H1 (cell line): ENCODE measurements at regions of chr3 and their contacts with region 1.

Region 1: DNA sequence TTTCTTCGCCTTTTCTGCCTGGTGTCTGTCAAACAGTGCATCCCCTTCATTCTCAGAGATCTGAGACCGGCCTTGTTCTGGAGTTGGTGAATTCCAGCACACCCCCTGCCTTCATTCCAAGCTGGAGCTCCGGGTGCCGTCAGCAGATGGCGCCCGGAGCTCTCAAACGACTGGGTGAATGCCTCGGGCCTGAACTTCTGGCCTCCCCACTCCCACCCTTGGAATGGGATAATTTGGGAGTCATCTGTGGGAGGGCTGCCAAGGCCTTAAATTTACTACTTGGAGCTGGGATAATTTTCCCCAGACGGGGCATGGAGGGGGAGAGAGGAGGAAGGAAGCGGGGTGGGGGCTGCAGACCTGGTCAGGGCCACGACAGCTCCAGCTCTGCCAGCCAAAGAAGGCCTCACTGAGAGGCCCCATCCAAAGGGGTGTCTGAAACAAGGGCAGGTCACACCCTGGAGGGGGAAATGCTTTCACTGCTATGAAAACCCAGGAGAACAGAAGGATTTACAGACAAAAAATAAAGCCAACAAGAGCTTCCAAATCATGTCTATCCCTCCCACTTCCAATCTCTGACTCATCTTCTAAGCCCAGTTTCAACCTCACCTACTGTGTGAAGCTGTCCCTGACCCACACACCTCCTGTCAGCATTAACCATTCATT is 187.9 kb downstream of the OPA1 start:
- DNase-seq: peak; percentile 50 to 71
- H3K4me3 ChIP-seq: no peak overlapping the region
- H3K27ac ChIP-seq: no peak overlapping the region
- H3K4me1 ChIP-seq: peaks cover 12 to 21% (median 18%) of the 10 kb centered on the region in 4 experiments
- H3K27me3 ChIP-seq: peaks cover 0 to 20% (median 4%) of the 10 kb centered on the region in 4 experiments; a peak in 5 of 7 replicates
- CTCF ChIP-seq: peak; percentile 63 to 88 (median 73)
- EP300 ChIP-seq: no peak
- POLR2A ChIP-seq: no peak
- RAD21 ChIP-seq: peak; percentile 92 to 98

Region 2: DNA sequence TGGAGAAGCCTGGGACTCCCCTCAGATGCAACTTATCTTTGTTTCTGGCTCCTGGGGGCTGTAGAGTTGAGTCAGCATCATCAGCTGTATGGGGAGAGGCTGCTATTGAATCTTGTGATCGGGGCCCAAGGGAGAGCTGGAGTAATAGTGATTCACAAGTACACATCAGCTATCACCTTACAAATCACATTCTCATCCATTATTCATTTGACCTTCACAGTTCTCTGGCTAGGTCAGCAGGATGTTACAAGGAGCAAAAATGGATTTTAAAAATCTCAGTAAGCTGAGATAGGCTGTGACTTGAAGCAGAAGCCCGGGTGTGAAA is 12.9 kb before region 1 on chr3:
- CTCF ChIA-PET with region 1: interaction called, 24 read pairs
- POLR2A ChIA-PET with region 1: no interaction called
- DNase-seq: no peak
- H3K4me3 ChIP-seq: no peak overlapping the region
- H3K27ac ChIP-seq: no peak overlapping the region
- H3K4me1 ChIP-seq: peaks cover 0 to 4% (median 0%) of the 10 kb centered on the region in 4 experiments; a peak in 3 of 7 replicates
- H3K27me3 ChIP-seq: peaks cover 0 to 3% (median 2%) of the 10 kb centered on the region in 4 experiments; a peak in 3 of 7 replicates
- CTCF ChIP-seq: no peak
- EP300 ChIP-seq: no peak
- POLR2A ChIP-seq: no peak
- RAD21 ChIP-seq: no peak

Region 3: DNA sequence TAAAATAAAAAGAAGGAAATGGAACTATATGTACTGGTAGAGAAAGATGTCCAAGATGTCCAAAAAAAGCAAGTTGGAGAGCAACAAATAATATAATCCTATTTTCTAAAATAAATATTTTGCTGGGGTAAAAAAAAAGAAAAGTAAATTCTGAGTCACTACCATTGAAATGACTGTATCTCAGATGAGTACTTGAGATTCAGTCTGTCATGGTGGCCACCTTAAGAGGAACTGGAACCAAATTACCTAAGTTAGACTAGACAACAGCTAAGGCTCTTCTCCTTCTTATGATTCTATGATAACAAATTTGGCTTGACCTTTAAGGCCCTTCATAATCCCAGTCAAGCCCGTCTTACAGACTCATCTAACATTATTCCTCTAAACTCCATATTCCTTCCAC is 84.4 kb after region 1 on chr3:
- CTCF ChIA-PET with region 1: interaction called, 13 read pairs
- POLR2A ChIA-PET with region 1: no interaction called
- DNase-seq: no peak
- H3K4me3 ChIP-seq: no peak overlapping the region
- H3K27ac ChIP-seq: no peak overlapping the region
- H3K4me1 ChIP-seq: peaks cover 0 to 16% (median 10%) of the 10 kb centered on the region in 4 experiments; a peak in 6 of 7 replicates
- H3K27me3 ChIP-seq: peaks cover 0 to 28% (median 24%) of the 10 kb centered on the region in 4 experiments; a peak in 6 of 7 replicates
- CTCF ChIP-seq: no peak
- EP300 ChIP-seq: no peak
- POLR2A ChIP-seq: no peak
- RAD21 ChIP-seq: no peak